ENCODE measurements at regions of chr2 and their contacts with region 1.

Region 1: GRCh38 chr2:200963124-200963917 is at the start of gene ORC2:
- DNase-seq: peak; percentile 95
- H3K4me3 ChIP-seq: peak within 1 kb of the TSS; percentile 65 to 100 (median 85)
- H3K27ac ChIP-seq: peak within 1 kb of the TSS; percentile 80
- H3K4me1 ChIP-seq: peaks cover 30% of the 10 kb centered on the region
- H3K27me3 ChIP-seq: no peaks in the 10 kb centered on the region
- CTCF ChIP-seq: peak; percentile 45 to 63
- total RNA-seq, gene ORC2: 14.8 to 44.5 TPM

Region 2: DNA sequence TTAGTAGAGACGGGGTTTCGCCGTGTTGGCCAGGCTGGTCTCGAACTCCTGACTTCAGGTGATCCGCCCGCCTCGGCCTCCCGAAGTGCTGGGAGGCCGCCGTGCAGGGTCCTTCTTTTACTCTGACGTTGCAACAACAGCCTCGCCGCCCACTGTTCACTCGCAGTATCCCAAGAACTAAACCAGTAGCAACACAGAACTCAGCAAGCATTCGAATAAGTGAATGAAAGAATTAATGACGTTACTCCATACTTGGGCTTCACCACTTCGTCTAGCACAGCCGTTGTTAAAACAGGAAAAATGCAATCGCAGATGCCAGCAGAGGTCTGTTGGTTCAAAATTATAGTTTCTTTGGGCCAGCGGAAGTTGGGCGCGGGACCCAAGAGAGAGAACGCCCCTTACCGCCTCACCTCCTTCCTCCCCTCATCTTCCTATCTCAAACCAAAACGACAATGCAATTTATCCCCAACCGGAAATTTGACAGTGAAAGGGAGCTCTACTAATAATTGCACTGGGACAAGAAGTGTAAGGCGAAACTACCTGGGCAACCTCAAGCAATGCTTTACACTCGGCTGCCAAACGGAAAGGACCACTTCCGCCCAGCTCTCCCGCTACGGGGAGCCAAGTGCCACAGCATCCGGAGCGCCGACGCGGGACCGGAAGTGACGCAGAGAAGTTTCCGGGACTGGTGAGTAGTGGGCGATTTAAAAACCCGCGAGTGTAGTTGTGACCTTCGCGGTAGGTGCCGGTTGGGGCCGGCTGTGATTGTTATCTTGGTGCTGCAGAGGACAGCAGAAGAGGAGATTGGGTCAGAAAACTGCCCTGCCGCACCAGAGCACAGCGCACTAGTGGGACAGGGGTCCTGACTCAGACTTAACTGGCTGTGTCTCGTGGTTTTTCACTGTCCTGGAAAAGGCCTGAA is 74.4 kb before region 1 on chr2 and contains the starts of genes NIF3L1 and PPIL3:
- CTCF ChIA-PET with region 1: no interaction called
- dilution Hi-C with region 1: no loop called
- in situ Hi-C with region 1: no loop called
- intact Hi-C with region 1: no loop called
- DNase-seq: peak; percentile 98
- H3K4me3 ChIP-seq: peak within 1 kb of the TSS; percentile 77 to 97 (median 85)
- H3K27ac ChIP-seq: peak within 1 kb of the TSS; percentile 92
- H3K4me1 ChIP-seq: peaks cover 5% of the 10 kb centered on the region
- H3K27me3 ChIP-seq: no peaks in the 10 kb centered on the region
- CTCF ChIP-seq: no peak
- total RNA-seq, gene NIF3L1: 18.0 to 23.2 TPM
- total RNA-seq, gene PPIL3: 18.5 to 45.1 TPM

Region 3: GRCh38 chr2:200944467-200945394 is 18.6 kb before region 1 on chr2:
- CTCF ChIA-PET with region 1: interaction called, 3 read pairs
- dilution Hi-C with region 1: no loop called
- in situ Hi-C with region 1: no loop called
- intact Hi-C with region 1: loop called (anchors 2 kb)
- DNase-seq: peak; percentile 90
- H3K4me3 ChIP-seq: no peak overlapping the region
- H3K27ac ChIP-seq: peak overlapping the region; percentile 64
- H3K4me1 ChIP-seq: peaks cover 11% of the 10 kb centered on the region
- H3K27me3 ChIP-seq: no peaks in the 10 kb centered on the region
- CTCF ChIP-seq: no peak

Region 4: GRCh38 chr2:201158111-201158929 is 195.0 kb after region 1 on chr2:
- CTCF ChIA-PET with region 1: interaction called, 13 read pairs
- dilution Hi-C with region 1: no loop called
- in situ Hi-C with region 1: no loop called
- intact Hi-C with region 1: loop called (anchors 5 kb)
- DNase-seq: peak; percentile 76
- H3K4me3 ChIP-seq: no peak overlapping the region
- H3K27ac ChIP-seq: peak overlapping the region; percentile 81
- H3K4me1 ChIP-seq: peaks cover 14% of the 10 kb centered on the region
- H3K27me3 ChIP-seq: no peaks in the 10 kb centered on the region
- CTCF ChIP-seq: peak; percentile 70 to 79

Measured in mammary epithelial cell (primary cell).